Left lung (tissue), 14 donors: ENCODE measurements at regions of chr12 and their contacts with region 1.

Region 1: GRCh38 chr12:38316391-38317129 is at the start of gene ALG10B:
- DNase-seq: peak; percentile 92 to 97 (median 94)
- ATAC-seq: peak; percentile 99
- H3K4me3 ChIP-seq: peak within 1 kb of the TSS; percentile 58 to 71
- H3K27ac ChIP-seq: peak within 1 kb of the TSS; percentile 83 to 85
- H3K4me1 ChIP-seq: peaks cover 0 to 15% of the 10 kb centered on the region in 2 donors
- H3K27me3 ChIP-seq: no peaks in the 10 kb centered on the region
- CTCF ChIP-seq: peak; percentile 54 to 76
- polyA plus RNA-seq, gene ALG10B: 11.3 to 15.1 (median 13.1) TPM

Region 2: DNA sequence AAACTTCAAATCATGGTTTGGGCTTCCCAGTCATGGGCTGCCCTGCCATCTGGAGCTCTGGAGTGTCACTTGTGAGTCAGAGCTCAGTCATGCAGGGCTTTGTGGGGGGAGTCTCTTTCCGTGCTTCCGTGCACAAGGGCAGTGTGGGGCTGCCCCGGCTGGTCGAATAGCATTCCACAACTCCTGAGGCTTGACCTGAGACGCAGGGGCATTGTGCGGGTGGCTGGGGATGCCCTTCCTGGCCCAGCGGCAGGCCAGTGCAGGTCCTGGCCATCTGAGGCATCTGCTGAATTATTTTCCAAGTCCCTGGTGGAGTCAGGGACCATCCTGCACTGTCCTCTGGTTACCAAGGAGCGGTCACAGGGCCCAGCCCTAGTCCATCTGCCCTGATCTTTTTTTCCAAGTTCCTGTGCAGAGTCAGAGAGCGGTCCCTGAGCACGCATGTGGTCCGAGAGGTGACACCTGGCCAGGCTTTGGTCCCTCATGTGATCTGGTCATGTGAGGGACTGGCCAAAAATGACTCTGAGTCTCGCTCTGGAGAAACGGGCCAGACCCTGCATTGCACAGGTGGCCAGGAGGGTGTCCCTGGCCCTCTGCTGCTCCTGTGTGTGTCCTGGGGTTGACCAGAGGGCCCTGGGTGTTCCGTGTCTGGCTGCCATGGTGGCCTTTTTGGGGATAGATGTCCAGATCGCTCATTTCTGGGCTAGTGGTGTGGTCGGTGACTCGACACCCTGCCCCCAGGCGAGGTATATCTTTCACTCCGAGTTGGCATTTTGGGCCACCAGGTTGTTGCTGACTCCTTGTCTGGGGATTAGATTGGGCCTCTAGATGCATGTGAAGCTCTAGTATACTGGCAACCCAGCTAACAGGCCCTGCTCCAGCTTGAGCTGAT is 166.9 kb before region 1 on chr12:
- intact Hi-C with region 1: loop called in 1 of 2 experiments (anchors 10 kb)
- DNase-seq: peak in 1 of 4 donors; percentile 39
- ATAC-seq: no peak
- H3K4me3 ChIP-seq: no peak overlapping the region
- H3K27ac ChIP-seq: no peak overlapping the region
- H3K4me1 ChIP-seq: no peaks in the 10 kb centered on the region
- H3K27me3 ChIP-seq: peaks cover 0 to 6% of the 10 kb centered on the region in 2 donors
- CTCF ChIP-seq: no peak